ENCODE measurements at regions of chrX and their contacts with region 1.

Region 1: GRCh38 chrX:49754233-49754857 is 58.6 kb upstream of the PAGE1 start:
- DNase-seq: peak; percentile 2 to 19 (median 8)
- H3K4me3 ChIP-seq: no peak overlapping the region
- H3K4me3 Mint-ChIP-seq: no peak overlapping the region
- H3K27ac ChIP-seq: no peak overlapping the region
- H3K27ac Mint-ChIP-seq: no peak overlapping the region
- H3K4me1 ChIP-seq: no peaks in the 10 kb centered on the region
- H3K4me1 Mint-ChIP-seq: no peaks in the 10 kb centered on the region
- H3K27me3 ChIP-seq: peaks cover 0 to 12% of the 10 kb centered on the region in 2 donors
- H3K27me3 Mint-ChIP-seq: peaks cover 1 to 10% (median 1%) of the 10 kb centered on the region in 3 donors
- CTCF ChIP-seq: peak; percentile 55

Region 2: GRCh38 chrX:49282647-49283011 is 471.7 kb before region 1 on chrX:
- intact Hi-C with region 1: loop called in 1 of 2 experiments (anchors 10 kb)
- DNase-seq: no peak
- H3K4me3 ChIP-seq: no peak overlapping the region
- H3K4me3 Mint-ChIP-seq: no peak overlapping the region
- H3K27ac ChIP-seq: no peak overlapping the region
- H3K27ac Mint-ChIP-seq: peak overlapping the region in 1 of 7 donors; percentile 55
- H3K4me1 ChIP-seq: no peaks in the 10 kb centered on the region
- H3K4me1 Mint-ChIP-seq: peaks cover 2% of the 10 kb centered on the region
- H3K27me3 ChIP-seq: no peaks in the 10 kb centered on the region
- H3K27me3 Mint-ChIP-seq: peaks cover 0 to 5% (median 0%) of the 10 kb centered on the region in 3 donors
- CTCF ChIP-seq: no peak

Region 3: GRCh38 chrX:49291615-49292337 is 462.6 kb before region 1 on chrX:
- intact Hi-C with region 1: loop called (anchors 10 kb)
- DNase-seq: peak; percentile 39 to 53 (median 47)
- H3K4me3 ChIP-seq: no peak overlapping the region
- H3K4me3 Mint-ChIP-seq: peak overlapping the region; percentile 27 to 30
- H3K27ac ChIP-seq: no peak overlapping the region
- H3K27ac Mint-ChIP-seq: peak overlapping the region in 2 of 7 donors; percentile 65 to 78
- H3K4me1 ChIP-seq: no peaks in the 10 kb centered on the region
- H3K4me1 Mint-ChIP-seq: peaks cover 5% of the 10 kb centered on the region
- H3K27me3 ChIP-seq: no peaks in the 10 kb centered on the region
- H3K27me3 Mint-ChIP-seq: peaks cover 0 to 11% (median 4%) of the 10 kb centered on the region in 3 donors
- CTCF ChIP-seq: peak; percentile 60

Region 4: GRCh38 chrX:49309401-49309981 is 444.9 kb before region 1 on chrX:
- intact Hi-C with region 1: no loop called
- DNase-seq: no peak
- H3K4me3 ChIP-seq: peak overlapping the region; percentile 14 to 69 (median 37)
- H3K4me3 Mint-ChIP-seq: peak overlapping the region; percentile 78 to 91
- H3K27ac ChIP-seq: peak overlapping the region; percentile 83 to 92
- H3K27ac Mint-ChIP-seq: peak overlapping the region; percentile 91 to 98 (median 94)
- H3K4me1 ChIP-seq: peaks cover 51 to 62% of the 10 kb centered on the region in 2 donors
- H3K4me1 Mint-ChIP-seq: peaks cover 57% of the 10 kb centered on the region
- H3K27me3 ChIP-seq: no peaks in the 10 kb centered on the region
- H3K27me3 Mint-ChIP-seq: peaks cover 0 to 4% (median 0%) of the 10 kb centered on the region in 3 donors
- CTCF ChIP-seq: no peak

Region 5: GRCh38 chrX:49868739-49869138 is 114.4 kb after region 1 on chrX:
- intact Hi-C with region 1: no loop called
- DNase-seq: no peak
- H3K4me3 ChIP-seq: no peak overlapping the region
- H3K4me3 Mint-ChIP-seq: no peak overlapping the region
- H3K27ac ChIP-seq: no peak overlapping the region
- H3K27ac Mint-ChIP-seq: peak overlapping the region in 1 of 7 donors; percentile 32
- H3K4me1 ChIP-seq: no peaks in the 10 kb centered on the region
- H3K4me1 Mint-ChIP-seq: no peaks in the 10 kb centered on the region
- H3K27me3 ChIP-seq: no peaks in the 10 kb centered on the region
- H3K27me3 Mint-ChIP-seq: peaks cover 0 to 14% (median 5%) of the 10 kb centered on the region in 3 donors
- CTCF ChIP-seq: no peak

Measured in CD14-positive monocyte (primary cell).